Esophagus squamous epithelium (tissue), 5 donors: ENCODE measurements at regions of chr21 and their contacts with region 1.

Region 1: GRCh38 chr21:42117229-42117966 is 46.3 kb downstream of the UMODL1 start:
- DNase-seq: no peak
- H3K4me3 ChIP-seq: peak overlapping the region in 1 of 4 donors; percentile 39
- H3K27ac ChIP-seq: no peak overlapping the region
- H3K4me1 ChIP-seq: peaks cover 21 to 56% (median 26%) of the 10 kb centered on the region in 3 donors
- H3K27me3 ChIP-seq: peaks cover 0 to 64% (median 0%) of the 10 kb centered on the region in 4 donors
- CTCF ChIP-seq: peak; percentile 89 to 97 (median 96)
- POLR2A ChIP-seq: no peak

Region 2: DNA sequence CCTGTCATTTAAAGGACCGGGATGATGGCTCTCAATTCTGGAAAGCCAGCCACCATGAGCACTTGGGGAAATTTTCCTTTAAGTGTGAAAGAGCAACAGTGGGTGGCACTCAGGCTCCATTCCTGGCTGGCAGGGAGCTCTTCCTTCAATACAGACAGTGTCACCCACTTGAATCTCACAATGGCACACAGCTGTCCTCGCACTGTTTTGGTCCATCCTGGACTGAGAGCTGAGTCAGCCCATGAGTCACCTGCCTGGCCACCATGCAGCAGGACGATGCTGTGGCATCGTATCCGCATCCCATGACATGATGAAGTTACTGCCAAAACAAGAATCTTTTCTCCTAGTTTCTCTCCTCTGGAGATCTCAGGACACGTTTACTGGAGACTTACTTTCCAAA is 615.5 kb before region 1 on chr21:
- intact Hi-C with region 1: no loop called
- DNase-seq: no peak
- H3K4me3 ChIP-seq: no peak overlapping the region
- H3K27ac ChIP-seq: peak overlapping the region in 1 of 4 donors; percentile 21
- H3K4me1 ChIP-seq: peaks cover 0 to 21% (median 0%) of the 10 kb centered on the region in 3 donors
- H3K27me3 ChIP-seq: peaks cover 0 to 54% (median 0%) of the 10 kb centered on the region in 4 donors
- CTCF ChIP-seq: no peak
- POLR2A ChIP-seq: no peak

Region 3: GRCh38 chr21:41828481-41829360 is 288.7 kb before region 1 on chr21:
- intact Hi-C with region 1: loop called (anchors 10 kb)
- DNase-seq: no peak
- H3K4me3 ChIP-seq: no peak overlapping the region
- H3K27ac ChIP-seq: no peak overlapping the region
- H3K4me1 ChIP-seq: no peaks in the 10 kb centered on the region
- H3K27me3 ChIP-seq: no peaks in the 10 kb centered on the region
- CTCF ChIP-seq: no peak
- POLR2A ChIP-seq: no peak

Region 4: GRCh38 chr21:41933313-41934086 is 183.9 kb before region 1 on chr21:
- intact Hi-C with region 1: loop called (anchors 10 kb)
- DNase-seq: no peak
- H3K4me3 ChIP-seq: peak overlapping the region in 3 of 4 donors; percentile 38 to 57 (median 40)
- H3K27ac ChIP-seq: peak overlapping the region; percentile 76 to 88 (median 85)
- H3K4me1 ChIP-seq: peaks cover 6 to 61% (median 47%) of the 10 kb centered on the region in 3 donors
- H3K27me3 ChIP-seq: no peaks in the 10 kb centered on the region
- CTCF ChIP-seq: peak in 4 of 6 experiments; percentile 34 to 51 (median 40)
- POLR2A ChIP-seq: no peak

Region 5: GRCh38 chr21:42009831-42010523 is 107.4 kb before region 1 on chr21 and contains the start of gene ZBTB21:
- intact Hi-C with region 1: loop called (anchors 10 kb)
- DNase-seq: peak; percentile 74
- H3K4me3 ChIP-seq: peak within 1 kb of the TSS; percentile 71 to 99 (median 79)
- H3K27ac ChIP-seq: peak within 1 kb of the TSS; percentile 95 to 99 (median 98)
- H3K4me1 ChIP-seq: peaks cover 4 to 47% (median 16%) of the 10 kb centered on the region in 3 donors
- H3K27me3 ChIP-seq: no peaks in the 10 kb centered on the region
- CTCF ChIP-seq: no peak
- POLR2A ChIP-seq: peak in 3 of 4 donors; percentile 82 to 97 (median 86)
- total RNA-seq, gene ZBTB21: 5.9 to 10.3 (median 7.8) TPM